ENCODE measurements at regions of chr19 and their contacts with region 1.

Region 1: GRCh38 chr19:6590827-6591319 is at the start of gene CD70:
- DNase-seq: peak; percentile 65
- H3K4me3 Mint-ChIP-seq: peak within 1 kb of the TSS; percentile 99
- H3K27ac Mint-ChIP-seq: peak within 1 kb of the TSS; percentile 89
- H3K4me1 Mint-ChIP-seq: peaks cover 59% of the 10 kb centered on the region
- H3K27me3 Mint-ChIP-seq: peaks cover 31% of the 10 kb centered on the region
- total RNA-seq, gene CD70: 85.5 and 88.7 TPM in 2 replicates

Region 2: GRCh38 chr19:6530386-6531161 is 60.3 kb before region 1 on chr19 and contains the start of gene TNFSF9:
- intact Hi-C with region 1: loop called (anchors 5 kb)
- DNase-seq: peak; percentile 78
- H3K4me3 Mint-ChIP-seq: peak within 1 kb of the TSS; percentile 85
- H3K27ac Mint-ChIP-seq: peak within 1 kb of the TSS; percentile 35
- H3K4me1 Mint-ChIP-seq: peaks cover 23% of the 10 kb centered on the region
- H3K27me3 Mint-ChIP-seq: peaks cover 27% of the 10 kb centered on the region
- total RNA-seq, gene TNFSF9: 6.9 and 7.4 TPM in 2 replicates

Region 3: GRCh38 chr19:6556480-6557195 is 34.2 kb before region 1 on chr19:
- intact Hi-C with region 1: loop called (anchors 5 kb)
- DNase-seq: no peak
- H3K4me3 Mint-ChIP-seq: no peak overlapping the region
- H3K27ac Mint-ChIP-seq: no peak overlapping the region
- H3K4me1 Mint-ChIP-seq: peaks cover 11% of the 10 kb centered on the region
- H3K27me3 Mint-ChIP-seq: peaks cover 6% of the 10 kb centered on the region

Region 4: GRCh38 chr19:6579450-6580178 is 11.3 kb before region 1 on chr19:
- intact Hi-C with region 1: loop called (anchors 1 kb)
- DNase-seq: no peak
- H3K4me3 Mint-ChIP-seq: no peak overlapping the region
- H3K27ac Mint-ChIP-seq: no peak overlapping the region
- H3K4me1 Mint-ChIP-seq: peaks cover 9% of the 10 kb centered on the region
- H3K27me3 Mint-ChIP-seq: no peaks in the 10 kb centered on the region

Region 5: DNA sequence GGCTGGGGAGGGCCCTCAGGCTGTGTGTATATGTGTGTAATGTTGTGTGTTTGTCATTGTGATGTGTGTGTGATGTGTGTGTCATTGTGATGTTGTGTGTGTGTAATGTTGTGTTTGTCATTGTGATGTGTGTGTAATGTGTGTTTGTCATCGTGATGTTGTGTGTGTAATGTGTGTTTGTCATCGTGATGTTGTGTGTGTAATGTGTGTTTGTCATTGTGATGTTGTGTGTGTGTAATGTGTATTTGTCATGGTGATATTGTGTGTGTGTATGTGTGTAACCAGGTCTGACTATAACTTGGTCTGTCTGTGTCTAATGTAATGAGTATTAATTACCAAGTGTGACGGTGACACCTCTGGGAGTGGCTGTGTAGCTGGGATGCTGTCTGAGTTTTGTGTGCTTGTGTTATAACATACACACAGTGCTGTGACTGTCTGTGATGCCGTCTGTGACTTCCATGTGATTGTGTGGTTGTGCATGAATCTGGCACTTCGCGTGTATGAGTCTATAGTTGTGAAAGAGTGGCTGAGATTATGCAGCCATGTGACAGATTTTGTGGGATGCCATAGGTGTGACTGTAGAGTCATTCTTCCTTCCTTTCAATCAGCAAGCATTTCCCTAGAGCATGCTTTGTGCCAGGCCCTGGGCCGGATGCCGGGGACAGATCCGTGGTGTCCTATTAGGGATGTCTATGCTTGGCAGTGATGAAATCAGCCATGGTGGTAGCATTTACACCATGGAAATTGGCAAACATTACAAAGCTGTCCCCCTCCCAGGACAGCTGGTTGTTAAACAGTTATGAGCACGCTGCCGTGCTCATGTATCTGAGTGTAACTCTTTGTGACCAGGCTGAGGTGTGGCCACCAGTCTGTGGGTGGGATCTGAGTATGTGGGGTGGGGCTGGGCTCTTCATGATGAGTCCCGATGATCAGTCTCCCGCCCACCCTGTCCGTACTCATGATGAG is 72.6 kb after region 1 on chr19:
- intact Hi-C with region 1: loop called (anchors 5 kb)
- DNase-seq: no peak
- H3K4me3 Mint-ChIP-seq: no peak overlapping the region
- H3K27ac Mint-ChIP-seq: no peak overlapping the region
- H3K4me1 Mint-ChIP-seq: peaks cover 43% of the 10 kb centered on the region
- H3K27me3 Mint-ChIP-seq: no peaks in the 10 kb centered on the region

Measured in activated T-helper 2 cell treated with anti-CD3 and anti-CD28 coated beads, Interferon-gamma antibody, Interleukin-2, Interleukin-4, amounts not matched to agents 10 μg/mL and 5 μg/mL and 100 μg/mL, durations not matched to agents 14 hours and 24 hours and 36 hours (primary cell).